MCF 10A (cell line): ENCODE measurements at regions of chr4 and their contacts with region 1.

Region 1: DNA sequence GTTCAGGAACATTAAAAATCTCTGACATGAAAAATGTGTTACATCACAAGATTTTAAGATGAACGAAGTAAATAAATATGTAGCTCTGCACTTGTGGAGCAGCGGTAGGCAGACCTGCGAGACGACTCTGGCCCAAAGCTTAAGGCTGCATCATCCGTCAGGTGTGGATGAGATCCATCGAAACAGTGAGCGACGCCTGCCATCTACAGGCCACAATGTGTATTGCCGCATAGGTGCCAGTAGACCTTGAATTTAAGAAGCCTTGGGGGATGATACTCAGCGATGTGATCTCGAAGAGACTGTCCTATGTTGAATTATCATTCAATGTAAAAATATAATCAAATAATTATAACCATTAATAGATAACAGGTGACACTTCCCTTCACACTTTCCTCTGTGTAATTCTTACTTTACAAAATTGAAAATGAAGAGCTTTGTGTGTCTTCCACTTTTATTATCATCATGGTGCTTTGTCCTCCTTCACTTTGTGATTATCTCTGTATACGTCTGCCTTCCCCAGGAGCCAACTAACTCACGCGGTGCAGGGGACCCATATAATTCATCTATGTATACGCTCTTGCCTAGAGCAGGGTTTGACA is 851.0 kb downstream of the RAB28 start:
- DNase-seq: peak; percentile 85
- H3K4me3 Mint-ChIP-seq: no peak overlapping the region
- H3K27ac Mint-ChIP-seq: no peak overlapping the region
- H3K4me1 Mint-ChIP-seq: no peaks in the 10 kb centered on the region
- H3K27me3 Mint-ChIP-seq: no peaks in the 10 kb centered on the region
- CTCF ChIP-seq: peak; percentile 87

Region 2: GRCh38 chr4:11765849-11766453 is 867.2 kb before region 1 on chr4:
- CTCF ChIA-PET with region 1: interaction called, 18 read pairs
- POLR2A ChIA-PET with region 1: no interaction called
- intact Hi-C with region 1: loop called (anchors 1 kb)
- DNase-seq: peak; percentile 59
- H3K4me3 Mint-ChIP-seq: no peak overlapping the region
- H3K27ac Mint-ChIP-seq: no peak overlapping the region
- H3K4me1 Mint-ChIP-seq: no peaks in the 10 kb centered on the region
- H3K27me3 Mint-ChIP-seq: no peaks in the 10 kb centered on the region
- CTCF ChIP-seq: peak; percentile 65

Region 3: DNA sequence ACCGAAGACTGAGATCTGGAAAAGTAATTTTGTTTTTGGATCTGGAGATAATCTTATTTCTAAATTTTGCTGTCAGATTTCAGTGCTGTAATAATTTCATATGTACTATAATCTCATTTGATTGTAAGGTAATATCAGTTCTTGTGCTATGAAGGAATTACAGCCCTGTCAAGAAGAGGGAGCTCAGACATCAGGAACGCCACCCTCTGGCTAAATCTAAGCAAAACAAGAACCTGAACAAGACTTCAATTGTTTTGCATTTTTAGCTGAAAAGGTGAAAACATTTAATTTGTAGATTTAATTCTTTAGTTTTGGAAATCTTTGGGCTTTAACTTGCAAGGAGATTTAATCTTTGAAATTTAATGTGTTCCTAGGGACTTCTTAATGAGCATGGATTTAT is 679.1 kb before region 1 on chr4:
- CTCF ChIA-PET with region 1: no interaction called
- POLR2A ChIA-PET with region 1: interaction called, 3 read pairs
- intact Hi-C with region 1: loop called (anchors 1 kb)
- DNase-seq: peak; percentile 52
- H3K4me3 Mint-ChIP-seq: no peak overlapping the region
- H3K27ac Mint-ChIP-seq: no peak overlapping the region
- H3K4me1 Mint-ChIP-seq: no peaks in the 10 kb centered on the region
- H3K27me3 Mint-ChIP-seq: no peaks in the 10 kb centered on the region
- CTCF ChIP-seq: peak; percentile 36

Region 4: GRCh38 chr4:12409507-12410190 is 223.5 kb before region 1 on chr4:
- CTCF ChIA-PET with region 1: interaction called, 30 read pairs
- POLR2A ChIA-PET with region 1: no interaction called
- intact Hi-C with region 1: loop called (anchors 1 kb)
- DNase-seq: peak; percentile 79
- H3K4me3 Mint-ChIP-seq: no peak overlapping the region
- H3K27ac Mint-ChIP-seq: no peak overlapping the region
- H3K4me1 Mint-ChIP-seq: peaks cover 19% of the 10 kb centered on the region
- H3K27me3 Mint-ChIP-seq: no peaks in the 10 kb centered on the region
- CTCF ChIP-seq: peak; percentile 44

Region 5: DNA sequence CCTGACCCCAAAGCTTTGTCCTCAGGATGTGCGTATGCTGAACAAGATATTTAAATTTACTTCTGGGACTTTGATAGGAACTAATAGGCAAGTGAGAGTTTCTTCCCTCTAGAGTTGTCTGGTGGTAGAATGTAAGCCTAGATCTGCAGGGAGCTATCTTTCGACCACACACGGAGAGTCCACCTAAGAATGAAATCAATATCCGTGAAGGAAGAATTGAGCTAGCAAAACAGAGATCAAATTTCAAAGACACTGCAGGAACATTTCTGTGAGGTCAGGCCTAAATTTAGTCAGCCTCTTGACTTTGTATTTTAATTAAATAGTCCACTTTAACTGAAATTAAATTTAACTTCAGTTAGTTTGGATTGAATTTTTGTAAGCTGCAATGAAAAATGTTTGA is 20.3 kb before region 1 on chr4:
- CTCF ChIA-PET with region 1: interaction called, 21 read pairs
- POLR2A ChIA-PET with region 1: no interaction called
- intact Hi-C with region 1: no loop called
- DNase-seq: no peak
- H3K4me3 Mint-ChIP-seq: no peak overlapping the region
- H3K27ac Mint-ChIP-seq: no peak overlapping the region
- H3K4me1 Mint-ChIP-seq: peaks cover 23% of the 10 kb centered on the region
- H3K27me3 Mint-ChIP-seq: no peaks in the 10 kb centered on the region
- CTCF ChIP-seq: no peak